HCT116 (cell line): ENCODE measurements at regions of chrX and their contacts with region 1.

Region 1: DNA sequence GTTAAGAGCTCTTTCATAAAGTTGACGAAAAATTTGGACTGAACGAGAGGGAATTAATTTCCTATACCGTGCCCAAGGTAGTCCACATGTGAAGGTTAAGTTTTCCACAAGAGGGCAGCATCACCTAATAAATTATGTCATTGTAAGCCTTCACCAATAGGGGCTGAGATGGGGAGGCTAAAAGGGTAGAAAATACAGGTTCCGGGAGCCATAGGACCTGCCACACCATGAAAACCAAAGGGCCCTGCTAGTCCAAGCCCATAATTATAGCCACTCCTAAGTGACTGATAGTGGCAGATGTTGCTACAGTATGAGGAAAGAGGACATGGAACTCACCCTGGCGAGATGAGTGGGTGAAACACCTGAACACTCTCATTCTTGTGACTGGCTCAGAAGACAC is 122.2 kb downstream of the SHROOM4 start:
- DNase-seq: peak; percentile 27
- ATAC-seq: peak; percentile 90
- H3K4me3 ChIP-seq: no peak overlapping the region
- H3K27ac ChIP-seq: no peak overlapping the region
- H3K4me1 ChIP-seq: no peaks in the 10 kb centered on the region
- H3K27me3 ChIP-seq: no peaks in the 10 kb centered on the region
- CTCF ChIP-seq: peak; percentile 30 to 54 (median 40); a peak in 5 of 6 replicates
- POLR2A ChIP-seq: no peak
- RAD21 ChIP-seq: peak; percentile 57

Region 2: GRCh38 chrX:49972328-49972860 is 719.4 kb before region 1 on chrX:
- CTCF ChIA-PET with region 1: no interaction called
- POLR2A ChIA-PET with region 1: no interaction called
- RAD21 ChIA-PET with region 1: no interaction called
- intact Hi-C with region 1: no loop called
- DNase-seq: no peak
- ATAC-seq: no peak
- H3K4me3 ChIP-seq: no peak overlapping the region
- H3K27ac ChIP-seq: no peak overlapping the region
- H3K4me1 ChIP-seq: no peaks in the 10 kb centered on the region
- H3K27me3 ChIP-seq: no peaks in the 10 kb centered on the region
- CTCF ChIP-seq: no peak
- POLR2A ChIP-seq: no peak
- RAD21 ChIP-seq: no peak

Region 3: GRCh38 chrX:50905334-50905733 is 213.5 kb after region 1 on chrX:
- CTCF ChIA-PET with region 1: interaction called, 12 read pairs
- POLR2A ChIA-PET with region 1: no interaction called
- RAD21 ChIA-PET with region 1: no interaction called
- intact Hi-C with region 1: loop called (anchors 1 kb)
- DNase-seq: no peak
- ATAC-seq: 0 out of 2 replicates have a peak, but pooled peaks have one; percentile 25
- H3K4me3 ChIP-seq: no peak overlapping the region
- H3K27ac ChIP-seq: no peak overlapping the region
- H3K4me1 ChIP-seq: no peaks in the 10 kb centered on the region
- H3K27me3 ChIP-seq: 0 out of 2 replicates have a peak, but pooled peaks cover 3% of the 10 kb centered on the region
- CTCF ChIP-seq: peak; percentile 6 to 53 (median 29); a peak in 3 of 6 replicates
- POLR2A ChIP-seq: no peak
- RAD21 ChIP-seq: peak; percentile 20; the same call in 1 of the 2 replicates

Region 4: DNA sequence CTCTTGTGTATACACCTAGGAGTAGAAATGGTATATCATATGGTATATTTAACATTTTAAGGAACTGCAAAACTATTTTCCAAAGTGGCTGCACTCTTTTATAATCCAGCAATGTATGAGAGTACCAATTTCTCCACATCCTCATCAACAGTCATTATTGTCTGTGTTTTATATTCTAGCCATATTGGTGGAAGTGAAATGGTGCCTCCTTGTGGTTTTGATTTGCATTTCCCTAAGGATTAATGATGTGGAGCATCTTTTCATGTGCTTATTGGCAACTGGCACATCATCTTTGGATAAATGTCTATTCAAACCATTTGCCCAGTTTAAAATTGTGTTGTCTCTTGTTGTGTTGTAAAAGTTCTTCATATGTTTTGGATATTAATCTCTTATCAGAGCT is 228.3 kb after region 1 on chrX:
- CTCF ChIA-PET with region 1: interaction called, 3 read pairs
- POLR2A ChIA-PET with region 1: no interaction called
- RAD21 ChIA-PET with region 1: no interaction called
- intact Hi-C with region 1: loop called (anchors 5 kb)
- DNase-seq: no peak
- ATAC-seq: no peak
- H3K4me3 ChIP-seq: no peak overlapping the region
- H3K27ac ChIP-seq: no peak overlapping the region
- H3K4me1 ChIP-seq: no peaks in the 10 kb centered on the region
- H3K27me3 ChIP-seq: no peaks in the 10 kb centered on the region; the same call in 1 of the 2 replicates
- CTCF ChIP-seq: peak; percentile 5 to 39 (median 31); a peak in 3 of 6 replicates
- POLR2A ChIP-seq: no peak
- RAD21 ChIP-seq: peak; percentile 43; the same call in 1 of the 2 replicates

Region 5: GRCh38 chrX:50988649-50989048 is 296.8 kb after region 1 on chrX:
- CTCF ChIA-PET with region 1: interaction called, 10 read pairs
- POLR2A ChIA-PET with region 1: no interaction called
- RAD21 ChIA-PET with region 1: no interaction called
- intact Hi-C with region 1: loop called (anchors 1 kb)
- DNase-seq: no peak
- ATAC-seq: peak; percentile 64
- H3K4me3 ChIP-seq: no peak overlapping the region
- H3K27ac ChIP-seq: no peak overlapping the region
- H3K4me1 ChIP-seq: no peaks in the 10 kb centered on the region
- H3K27me3 ChIP-seq: peaks cover 9% of the 10 kb centered on the region; the same call in 1 of the 2 replicates
- CTCF ChIP-seq: peak; percentile 27 to 51 (median 46); a peak in 5 of 6 replicates
- POLR2A ChIP-seq: no peak
- RAD21 ChIP-seq: peak; percentile 45

Region 6: GRCh38 chrX:51047836-51048349 is 356.1 kb after region 1 on chrX:
- CTCF ChIA-PET with region 1: interaction called, 10 read pairs
- POLR2A ChIA-PET with region 1: no interaction called
- RAD21 ChIA-PET with region 1: no interaction called
- intact Hi-C with region 1: no loop called
- DNase-seq: no peak
- ATAC-seq: no peak
- H3K4me3 ChIP-seq: no peak overlapping the region
- H3K27ac ChIP-seq: no peak overlapping the region
- H3K4me1 ChIP-seq: no peaks in the 10 kb centered on the region
- H3K27me3 ChIP-seq: 0 out of 2 replicates have a peak, but pooled peaks cover 2% of the 10 kb centered on the region
- CTCF ChIP-seq: no peak
- POLR2A ChIP-seq: no peak
- RAD21 ChIP-seq: peak; percentile 24; the same call in 1 of the 2 replicates

Region 7: GRCh38 chrX:51461053-51462044 is 769.5 kb after region 1 on chrX:
- CTCF ChIA-PET with region 1: interaction called, 3 read pairs
- POLR2A ChIA-PET with region 1: no interaction called
- RAD21 ChIA-PET with region 1: no interaction called
- intact Hi-C with region 1: loop called (anchors 10 kb)
- DNase-seq: peak; percentile 7
- ATAC-seq: no peak
- H3K4me3 ChIP-seq: no peak overlapping the region
- H3K27ac ChIP-seq: no peak overlapping the region
- H3K4me1 ChIP-seq: no peaks in the 10 kb centered on the region
- H3K27me3 ChIP-seq: no peaks in the 10 kb centered on the region
- CTCF ChIP-seq: peak in 2 of 3 experiments; percentile 42 to 59; a peak in 4 of 6 replicates
- POLR2A ChIP-seq: no peak
- RAD21 ChIP-seq: peak; percentile 29; the same call in 1 of the 2 replicates